MCF 10A (cell line): ENCODE measurements at regions of chr3 and their contacts with region 1.

Region 1: GRCh38 chr3:44510000-44510368 is 32.5 kb upstream of the ZNF445 start:
- DNase-seq: peak; percentile 20
- H3K4me3 Mint-ChIP-seq: peak overlapping the region; percentile 94
- H3K27ac Mint-ChIP-seq: peak overlapping the region; percentile 94
- H3K4me1 Mint-ChIP-seq: peaks cover 10% of the 10 kb centered on the region
- H3K27me3 Mint-ChIP-seq: no peaks in the 10 kb centered on the region
- CTCF ChIP-seq: no peak

Region 2: DNA sequence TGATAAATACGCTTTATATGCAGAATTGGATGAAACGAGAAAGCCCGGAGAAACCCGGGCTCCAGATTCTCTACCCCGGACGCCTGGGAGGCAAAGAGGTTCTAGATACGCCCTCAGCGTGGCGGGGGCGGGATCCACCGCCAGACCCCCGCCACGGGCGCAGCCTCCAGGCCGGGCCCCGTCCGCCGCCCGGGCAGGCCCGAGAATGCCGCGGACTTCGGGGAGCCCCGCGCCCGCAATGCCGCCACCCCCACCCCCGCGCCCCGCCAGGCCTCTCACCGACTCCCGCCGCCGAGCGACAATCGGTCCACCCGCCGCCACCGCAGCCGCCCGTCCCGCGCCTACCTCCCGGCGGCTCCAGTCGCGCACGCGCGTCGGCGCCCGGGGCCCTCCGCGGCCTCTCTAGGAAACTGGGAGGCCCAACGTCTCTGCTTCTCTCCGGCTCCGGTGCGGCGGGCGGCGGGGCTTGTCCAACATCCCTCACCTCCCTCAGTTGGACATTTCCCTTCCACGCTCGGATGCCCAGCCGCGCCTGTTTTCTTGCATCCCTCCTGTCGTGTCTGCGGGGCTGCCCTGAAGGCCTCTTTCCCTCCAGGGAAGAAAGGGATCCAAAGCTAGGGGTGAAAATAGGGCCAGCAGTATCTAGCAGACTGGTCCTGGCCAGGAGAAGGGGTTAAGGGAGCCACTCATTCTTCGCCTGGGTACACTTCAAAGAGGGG is 32.5 kb before region 1 on chr3 and contains the start of gene ZNF445:
- CTCF ChIA-PET with region 1: no interaction called
- POLR2A ChIA-PET with region 1: interaction called, 17 read pairs
- intact Hi-C with region 1: no loop called
- DNase-seq: peak; percentile 75
- H3K4me3 Mint-ChIP-seq: peak within 1 kb of the TSS; percentile 88
- H3K27ac Mint-ChIP-seq: peak within 1 kb of the TSS; percentile 85
- H3K4me1 Mint-ChIP-seq: peaks cover 19% of the 10 kb centered on the region
- H3K27me3 Mint-ChIP-seq: no peaks in the 10 kb centered on the region
- CTCF ChIP-seq: no peak
- total RNA-seq, gene ZNF445: 10.1 and 11.0 TPM in 2 replicates

Region 3: DNA sequence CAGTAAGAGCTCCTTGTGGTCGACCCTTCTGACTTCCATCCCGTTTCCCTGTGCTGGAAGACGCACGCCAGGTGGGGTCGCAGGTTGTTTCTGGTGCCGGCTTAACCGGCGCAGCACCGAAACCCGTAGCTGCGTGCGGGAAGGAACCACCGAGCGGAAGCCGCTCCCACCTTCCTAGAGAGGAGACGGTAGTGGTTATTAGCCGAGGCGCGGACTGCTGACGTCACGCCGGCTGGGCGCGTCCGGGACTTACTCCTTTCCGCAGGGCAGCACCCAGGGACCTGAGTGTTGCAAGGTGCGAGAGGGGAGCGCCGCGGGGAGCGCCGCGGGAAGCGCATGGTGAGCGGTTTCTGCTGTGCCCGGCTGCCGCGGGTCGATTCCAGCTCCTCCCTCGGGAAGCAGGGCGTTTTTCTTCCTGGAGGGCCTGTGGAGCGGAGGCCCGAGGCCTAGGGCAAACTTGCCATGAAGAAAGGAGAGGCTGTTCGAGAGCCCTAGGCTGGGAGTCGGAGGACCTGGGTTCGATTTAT is 219.5 kb after region 1 on chr3 and contains the start of gene ZNF501:
- CTCF ChIA-PET with region 1: no interaction called
- POLR2A ChIA-PET with region 1: no interaction called
- intact Hi-C with region 1: no loop called
- DNase-seq: no peak
- H3K4me3 Mint-ChIP-seq: peak within 1 kb of the TSS; percentile 46
- H3K27ac Mint-ChIP-seq: no peak within 1 kb of the TSS
- H3K4me1 Mint-ChIP-seq: no peaks in the 10 kb centered on the region
- H3K27me3 Mint-ChIP-seq: no peaks in the 10 kb centered on the region
- CTCF ChIP-seq: no peak
- total RNA-seq, gene ZNF501: 0.17 and 0.40 TPM in 2 replicates

Region 4: GRCh38 chr3:44870381-44871078 is 360.5 kb after region 1 on chr3:
- CTCF ChIA-PET with region 1: no interaction called
- POLR2A ChIA-PET with region 1: no interaction called
- intact Hi-C with region 1: no loop called
- DNase-seq: no peak
- H3K4me3 Mint-ChIP-seq: no peak overlapping the region
- H3K27ac Mint-ChIP-seq: no peak overlapping the region
- H3K4me1 Mint-ChIP-seq: no peaks in the 10 kb centered on the region
- H3K27me3 Mint-ChIP-seq: no peaks in the 10 kb centered on the region
- CTCF ChIP-seq: no peak